Mammary epithelial cell (primary cell): ENCODE measurements at regions of chr3 and their contacts with region 1.

Region 1: DNA sequence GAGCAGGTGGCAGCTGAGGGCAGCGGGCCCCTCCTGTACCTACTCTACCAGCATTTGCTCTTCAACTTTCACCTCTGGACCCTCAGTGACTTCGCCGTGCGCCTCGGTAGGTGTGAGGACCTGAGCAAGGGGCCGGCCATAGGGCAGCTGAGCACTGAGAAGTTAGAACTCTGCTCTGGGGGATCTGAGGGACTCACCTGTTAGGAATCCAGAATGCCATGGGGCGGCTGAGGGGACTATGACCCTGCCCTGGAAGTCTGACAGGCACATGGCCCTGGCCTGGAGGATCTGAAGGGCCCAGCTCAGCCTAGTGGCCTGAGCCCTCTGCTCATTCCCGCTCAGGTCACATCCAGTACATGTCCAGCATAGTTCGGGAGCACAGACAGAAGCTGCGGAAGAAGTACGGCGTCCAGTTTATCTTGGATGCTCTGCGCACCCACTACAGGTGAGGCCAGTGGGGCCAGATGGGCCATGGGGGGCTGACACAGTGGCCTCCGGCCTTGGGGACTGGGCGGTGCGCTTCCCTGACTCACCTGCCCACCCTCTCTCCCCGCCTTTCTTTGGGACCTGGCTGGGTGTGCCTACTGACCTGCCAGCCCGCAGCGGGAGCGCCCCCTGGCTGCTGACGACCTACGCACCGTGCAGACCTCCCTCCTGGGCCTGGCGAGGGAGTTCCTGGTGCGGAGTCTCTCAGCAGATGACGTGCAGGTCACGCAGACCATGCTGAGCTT is 18.8 kb downstream of the NBEAL2 start:
- DNase-seq: peak; percentile 50
- H3K4me3 ChIP-seq: no peak overlapping the region
- H3K27ac ChIP-seq: no peak overlapping the region
- H3K4me1 ChIP-seq: peaks cover 18% of the 10 kb centered on the region
- H3K27me3 ChIP-seq: no peaks in the 10 kb centered on the region
- CTCF ChIP-seq: peak; percentile 86 to 93

Region 2: GRCh38 chr3:46866720-46867549 is 131.4 kb before region 1 on chr3:
- CTCF ChIA-PET with region 1: no interaction called
- dilution Hi-C with region 1: no loop called
- in situ Hi-C with region 1: no loop called
- intact Hi-C with region 1: loop called (anchors 2 kb)
- DNase-seq: peak; percentile 22
- H3K4me3 ChIP-seq: no peak overlapping the region
- H3K27ac ChIP-seq: no peak overlapping the region
- H3K4me1 ChIP-seq: no peaks in the 10 kb centered on the region
- H3K27me3 ChIP-seq: no peaks in the 10 kb centered on the region
- CTCF ChIP-seq: peak; percentile 74 to 95

Region 3: GRCh38 chr3:46923559-46924350 is 74.5 kb before region 1 on chr3:
- CTCF ChIA-PET with region 1: no interaction called
- dilution Hi-C with region 1: no loop called
- in situ Hi-C with region 1: no loop called
- intact Hi-C with region 1: loop called (anchors 1 kb)
- DNase-seq: no peak
- H3K4me3 ChIP-seq: no peak overlapping the region
- H3K27ac ChIP-seq: no peak overlapping the region
- H3K4me1 ChIP-seq: no peaks in the 10 kb centered on the region
- H3K27me3 ChIP-seq: no peaks in the 10 kb centered on the region
- CTCF ChIP-seq: peak; percentile 57 to 72

Region 4: DNA sequence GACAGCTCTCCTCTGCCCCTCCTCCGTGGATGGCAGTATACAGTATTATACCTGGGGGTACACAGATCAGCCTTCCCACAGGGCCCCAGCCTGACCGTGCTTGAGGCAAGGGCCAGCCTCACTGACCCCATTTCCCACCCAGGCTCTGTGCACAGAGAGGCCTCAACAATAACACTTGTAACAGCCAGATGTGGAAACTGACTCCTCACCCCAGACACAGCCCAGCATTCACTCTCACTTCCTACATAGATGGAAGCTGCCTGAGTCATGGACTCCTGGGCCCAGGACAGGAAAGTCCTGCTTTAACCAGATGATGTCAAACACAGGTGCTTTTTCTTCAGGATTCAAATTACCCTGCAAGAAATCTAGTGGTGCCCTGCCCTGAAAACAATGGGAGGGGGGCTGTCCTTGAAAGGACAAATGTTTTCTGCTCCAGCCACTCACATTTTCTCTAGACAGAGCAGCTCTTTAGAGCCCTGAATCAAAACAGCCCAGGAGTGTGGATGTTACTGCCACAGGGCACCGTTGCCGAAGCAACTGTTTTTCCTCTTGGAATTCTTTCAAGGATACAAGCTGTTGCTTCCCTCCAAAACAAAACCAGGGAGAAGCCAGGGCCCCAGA is 38.1 kb before region 1 on chr3:
- CTCF ChIA-PET with region 1: interaction called, 15 read pairs
- dilution Hi-C with region 1: no loop called
- in situ Hi-C with region 1: no loop called
- intact Hi-C with region 1: no loop called
- DNase-seq: peak; percentile 87
- H3K4me3 ChIP-seq: no peak overlapping the region
- H3K27ac ChIP-seq: peak overlapping the region; percentile 49
- H3K4me1 ChIP-seq: peaks cover 40% of the 10 kb centered on the region
- H3K27me3 ChIP-seq: no peaks in the 10 kb centered on the region
- CTCF ChIP-seq: no peak

Region 5: DNA sequence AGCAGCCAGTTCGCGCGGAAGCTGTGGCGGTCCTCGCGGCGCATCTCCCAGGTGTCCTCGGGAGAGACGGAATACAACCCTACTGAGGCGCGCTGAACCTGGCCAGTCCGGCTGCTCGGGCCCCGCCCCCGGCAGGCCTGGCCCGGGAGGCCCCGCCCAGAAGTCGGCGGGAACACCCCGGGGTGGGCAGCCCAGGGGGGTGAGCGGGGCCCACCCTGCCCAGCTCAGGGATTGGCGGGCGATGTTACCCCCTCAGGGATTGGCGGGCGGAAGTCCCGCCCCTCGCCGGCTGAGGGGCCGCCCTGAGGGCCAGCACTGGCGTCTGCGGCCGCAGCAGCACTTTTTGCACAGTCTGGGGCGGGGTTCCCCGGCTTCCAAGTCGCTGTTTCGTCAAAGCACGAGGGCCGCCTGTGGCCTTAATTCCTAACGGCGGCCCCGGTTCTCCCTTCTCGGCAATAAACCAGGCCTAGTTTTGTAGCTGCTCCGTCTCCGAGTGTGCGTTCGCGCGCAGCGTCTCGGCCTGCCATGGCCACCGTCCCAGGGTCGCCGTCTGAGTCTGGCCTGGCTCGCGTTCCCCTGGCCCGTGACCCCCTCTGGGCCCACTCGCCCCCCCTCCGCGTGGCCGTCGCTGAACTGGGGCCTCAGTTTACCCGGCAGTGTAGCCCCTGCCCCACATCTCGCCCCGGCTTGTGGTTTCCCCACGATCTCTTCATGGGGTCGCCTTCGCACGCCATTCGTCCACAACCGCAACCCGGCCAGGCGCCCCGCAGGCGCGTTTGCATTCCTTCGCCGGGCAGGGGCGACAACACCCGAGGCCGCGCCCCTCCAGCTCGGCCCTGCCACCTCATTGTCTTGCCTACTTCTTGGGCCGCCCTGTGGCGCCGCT is 11.2 kb after region 1 on chr3:
- CTCF ChIA-PET with region 1: no interaction called
- dilution Hi-C with region 1: no loop called
- in situ Hi-C with region 1: no loop called
- intact Hi-C with region 1: no loop called
- DNase-seq: peak; percentile 20
- H3K4me3 ChIP-seq: peak overlapping the region in 1 of 3 experiments; percentile 20
- H3K27ac ChIP-seq: no peak overlapping the region
- H3K4me1 ChIP-seq: peaks cover 5% of the 10 kb centered on the region
- H3K27me3 ChIP-seq: no peaks in the 10 kb centered on the region
- CTCF ChIP-seq: no peak

Region 6: GRCh38 chr3:47669026-47669749 is 670.9 kb after region 1 on chr3:
- CTCF ChIA-PET with region 1: no interaction called
- dilution Hi-C with region 1: no loop called
- in situ Hi-C with region 1: no loop called
- intact Hi-C with region 1: no loop called
- DNase-seq: peak; percentile 51
- H3K4me3 ChIP-seq: no peak overlapping the region
- H3K27ac ChIP-seq: no peak overlapping the region
- H3K4me1 ChIP-seq: peaks cover 3% of the 10 kb centered on the region
- H3K27me3 ChIP-seq: no peaks in the 10 kb centered on the region
- CTCF ChIP-seq: no peak